ENCODE measurements at regions of chr5 and their contacts with region 1.

Region 1: DNA sequence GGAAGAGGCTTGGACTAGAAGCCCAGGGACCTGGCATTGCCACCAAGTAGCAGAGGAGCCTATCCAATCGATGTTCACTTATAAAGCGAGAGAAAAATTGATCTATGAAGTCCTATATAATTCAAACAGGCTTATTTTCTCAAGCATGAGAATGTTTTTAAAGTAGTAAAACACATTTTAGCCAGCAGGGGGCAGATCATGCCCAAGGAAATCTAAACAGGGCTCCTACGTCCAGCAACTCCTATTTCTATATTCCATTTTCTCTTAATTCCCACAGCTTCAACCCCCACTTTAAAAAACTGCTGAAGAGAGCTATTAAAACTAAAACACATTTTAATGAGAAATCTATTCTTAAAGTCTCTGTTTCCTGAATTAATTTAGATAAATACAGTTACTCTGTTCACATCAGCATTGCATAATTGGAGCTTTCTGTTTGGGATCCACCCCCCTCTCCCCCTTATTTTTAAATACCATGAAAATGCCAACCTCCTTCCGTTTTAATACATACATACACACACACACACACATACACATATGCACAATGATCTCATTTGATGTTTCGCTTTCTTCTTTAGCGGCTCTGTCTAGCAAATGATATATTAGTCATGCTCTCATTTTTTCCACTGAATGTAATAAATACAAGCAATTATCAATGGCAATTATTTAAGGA is 144.9 kb downstream of the MYO10 start:
- DNase-seq: peak in 5 of 9 donors; percentile 11 to 32 (median 25)
- ATAC-seq: peak; percentile 44
- H3K4me3 ChIP-seq: no peak overlapping the region
- H3K4me3 Mint-ChIP-seq: peak overlapping the region in 8 of 10 donors; percentile 8 to 72 (median 58)
- H3K27ac ChIP-seq: no peak overlapping the region
- H3K27ac Mint-ChIP-seq: no peak overlapping the region
- H3K4me1 ChIP-seq: no peaks in the 10 kb centered on the region
- H3K4me1 Mint-ChIP-seq: peaks cover 0 to 11% (median 5%) of the 10 kb centered on the region in 7 donors
- H3K27me3 ChIP-seq: no peaks in the 10 kb centered on the region
- H3K27me3 Mint-ChIP-seq: no peaks in the 10 kb centered on the region

Region 2: GRCh38 chr5:16489322-16489791 is 301.8 kb before region 1 on chr5:
- CTCF ChIA-PET with region 1: no interaction called
- POLR2A ChIA-PET with region 1: no interaction called
- intact Hi-C with region 1: loop called in 1 of 2 experiments (anchors 1 kb)
- DNase-seq: peak in 5 of 9 donors; percentile 18 to 53 (median 46)
- ATAC-seq: peak; percentile 86
- H3K4me3 ChIP-seq: no peak overlapping the region
- H3K4me3 Mint-ChIP-seq: no peak overlapping the region
- H3K27ac ChIP-seq: no peak overlapping the region
- H3K27ac Mint-ChIP-seq: peak overlapping the region in 4 of 9 donors; percentile 1 to 60 (median 41)
- H3K4me1 ChIP-seq: no peaks in the 10 kb centered on the region
- H3K4me1 Mint-ChIP-seq: peaks cover 9 to 86% (median 71%) of the 10 kb centered on the region in 7 donors
- H3K27me3 ChIP-seq: no peaks in the 10 kb centered on the region
- H3K27me3 Mint-ChIP-seq: no peaks in the 10 kb centered on the region

Region 3: GRCh38 chr5:16754601-16755000 is 36.6 kb before region 1 on chr5:
- CTCF ChIA-PET with region 1: no interaction called
- POLR2A ChIA-PET with region 1: no interaction called
- intact Hi-C with region 1: no loop called
- DNase-seq: no peak
- ATAC-seq: no peak
- H3K4me3 ChIP-seq: no peak overlapping the region
- H3K4me3 Mint-ChIP-seq: no peak overlapping the region
- H3K27ac ChIP-seq: no peak overlapping the region
- H3K27ac Mint-ChIP-seq: no peak overlapping the region
- H3K4me1 ChIP-seq: no peaks in the 10 kb centered on the region
- H3K4me1 Mint-ChIP-seq: peaks cover 3 to 14% (median 6%) of the 10 kb centered on the region in 7 donors
- H3K27me3 ChIP-seq: no peaks in the 10 kb centered on the region
- H3K27me3 Mint-ChIP-seq: no peaks in the 10 kb centered on the region

Region 4: GRCh38 chr5:16773991-16774390 is 17.2 kb before region 1 on chr5:
- CTCF ChIA-PET with region 1: no interaction called
- POLR2A ChIA-PET with region 1: no interaction called
- intact Hi-C with region 1: no loop called
- DNase-seq: no peak
- ATAC-seq: no peak
- H3K4me3 ChIP-seq: no peak overlapping the region
- H3K4me3 Mint-ChIP-seq: no peak overlapping the region
- H3K27ac ChIP-seq: no peak overlapping the region
- H3K27ac Mint-ChIP-seq: no peak overlapping the region
- H3K4me1 ChIP-seq: no peaks in the 10 kb centered on the region
- H3K4me1 Mint-ChIP-seq: no peaks in the 10 kb centered on the region
- H3K27me3 ChIP-seq: no peaks in the 10 kb centered on the region
- H3K27me3 Mint-ChIP-seq: no peaks in the 10 kb centered on the region

Region 5: DNA sequence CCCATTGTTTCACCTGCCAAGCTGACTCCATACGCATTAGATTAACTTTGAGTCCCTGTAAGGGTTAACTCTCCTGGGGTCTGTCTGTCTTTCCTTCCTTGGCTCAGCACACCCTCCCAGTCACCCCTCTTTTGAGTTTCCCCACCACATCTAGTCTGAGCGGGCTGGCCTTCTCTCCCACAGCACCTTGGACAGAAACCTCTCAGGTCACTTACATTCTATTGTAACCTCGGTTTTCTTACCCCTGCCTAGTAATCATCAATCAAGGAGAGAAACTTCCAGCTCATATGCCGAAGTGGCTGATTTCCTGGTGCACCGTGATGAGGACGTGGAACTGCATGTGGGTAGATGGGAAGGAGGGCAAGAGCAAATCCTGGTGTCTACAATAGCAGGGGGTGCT is 42.9 kb after region 1 on chr5:
- CTCF ChIA-PET with region 1: no interaction called
- POLR2A ChIA-PET with region 1: no interaction called
- intact Hi-C with region 1: no loop called
- DNase-seq: no peak
- ATAC-seq: no peak
- H3K4me3 ChIP-seq: no peak overlapping the region
- H3K4me3 Mint-ChIP-seq: no peak overlapping the region
- H3K27ac ChIP-seq: no peak overlapping the region
- H3K27ac Mint-ChIP-seq: no peak overlapping the region
- H3K4me1 ChIP-seq: no peaks in the 10 kb centered on the region
- H3K4me1 Mint-ChIP-seq: no peaks in the 10 kb centered on the region
- H3K27me3 ChIP-seq: no peaks in the 10 kb centered on the region
- H3K27me3 Mint-ChIP-seq: peaks cover 0 to 39% (median 15%) of the 10 kb centered on the region in 5 donors

Region 6: GRCh38 chr5:17132444-17133083 is 341.4 kb after region 1 on chr5:
- CTCF ChIA-PET with region 1: no interaction called
- POLR2A ChIA-PET with region 1: no interaction called
- intact Hi-C with region 1: loop called in 1 of 2 experiments (anchors 1 kb)
- DNase-seq: no peak
- ATAC-seq: no peak
- H3K4me3 ChIP-seq: no peak overlapping the region
- H3K4me3 Mint-ChIP-seq: no peak overlapping the region
- H3K27ac ChIP-seq: no peak overlapping the region
- H3K27ac Mint-ChIP-seq: no peak overlapping the region
- H3K4me1 ChIP-seq: no peaks in the 10 kb centered on the region
- H3K4me1 Mint-ChIP-seq: peaks cover 0 to 12% (median 7%) of the 10 kb centered on the region in 7 donors
- H3K27me3 ChIP-seq: no peaks in the 10 kb centered on the region
- H3K27me3 Mint-ChIP-seq: peaks cover 4 to 20% (median 5%) of the 10 kb centered on the region in 5 donors

Region 7: GRCh38 chr5:17189381-17190036 is 398.3 kb after region 1 on chr5:
- CTCF ChIA-PET with region 1: no interaction called
- POLR2A ChIA-PET with region 1: no interaction called
- intact Hi-C with region 1: loop called in 1 of 2 experiments (anchors 1 kb)
- DNase-seq: peak; percentile 5 to 52 (median 37)
- ATAC-seq: no peak
- H3K4me3 ChIP-seq: no peak overlapping the region
- H3K4me3 Mint-ChIP-seq: no peak overlapping the region
- H3K27ac ChIP-seq: no peak overlapping the region
- H3K27ac Mint-ChIP-seq: peak overlapping the region in 1 of 9 donors; percentile 60
- H3K4me1 ChIP-seq: no peaks in the 10 kb centered on the region
- H3K4me1 Mint-ChIP-seq: peaks cover 0 to 7% (median 3%) of the 10 kb centered on the region in 7 donors
- H3K27me3 ChIP-seq: no peaks in the 10 kb centered on the region
- H3K27me3 Mint-ChIP-seq: peaks cover 0 to 29% (median 6%) of the 10 kb centered on the region in 5 donors

Region 8: DNA sequence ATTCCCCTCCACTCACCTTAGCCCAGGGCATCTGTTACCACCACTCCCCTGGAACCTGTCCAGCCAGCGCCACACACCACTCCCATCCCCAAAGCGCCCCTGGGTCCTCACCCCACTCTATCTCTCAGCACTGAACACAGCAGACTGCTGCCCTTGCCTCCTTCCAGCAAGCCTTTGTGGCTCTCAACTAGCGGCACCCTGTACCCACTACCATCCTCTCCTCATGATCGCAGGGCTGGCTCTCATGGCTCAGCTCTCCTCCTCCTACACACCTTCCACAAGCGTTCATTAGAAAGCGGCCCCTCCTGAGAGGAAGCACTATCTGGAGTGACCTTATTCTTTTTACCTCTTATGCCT is 412.9 kb after region 1 on chr5:
- CTCF ChIA-PET with region 1: no interaction called
- POLR2A ChIA-PET with region 1: no interaction called
- intact Hi-C with region 1: loop called in 1 of 2 experiments (anchors 1 kb)
- DNase-seq: no peak
- ATAC-seq: no peak
- H3K4me3 ChIP-seq: no peak overlapping the region
- H3K4me3 Mint-ChIP-seq: no peak overlapping the region
- H3K27ac ChIP-seq: no peak overlapping the region
- H3K27ac Mint-ChIP-seq: no peak overlapping the region
- H3K4me1 ChIP-seq: no peaks in the 10 kb centered on the region
- H3K4me1 Mint-ChIP-seq: no peaks in the 10 kb centered on the region
- H3K27me3 ChIP-seq: no peaks in the 10 kb centered on the region
- H3K27me3 Mint-ChIP-seq: peaks cover 0 to 31% (median 20%) of the 10 kb centered on the region in 5 donors

Measured in naive thymus-derived CD4-positive, alpha-beta T cell (primary cell).